GM12878 (cell line): ENCODE measurements at regions of chr1 and their contacts with region 1.

Region 1: DNA sequence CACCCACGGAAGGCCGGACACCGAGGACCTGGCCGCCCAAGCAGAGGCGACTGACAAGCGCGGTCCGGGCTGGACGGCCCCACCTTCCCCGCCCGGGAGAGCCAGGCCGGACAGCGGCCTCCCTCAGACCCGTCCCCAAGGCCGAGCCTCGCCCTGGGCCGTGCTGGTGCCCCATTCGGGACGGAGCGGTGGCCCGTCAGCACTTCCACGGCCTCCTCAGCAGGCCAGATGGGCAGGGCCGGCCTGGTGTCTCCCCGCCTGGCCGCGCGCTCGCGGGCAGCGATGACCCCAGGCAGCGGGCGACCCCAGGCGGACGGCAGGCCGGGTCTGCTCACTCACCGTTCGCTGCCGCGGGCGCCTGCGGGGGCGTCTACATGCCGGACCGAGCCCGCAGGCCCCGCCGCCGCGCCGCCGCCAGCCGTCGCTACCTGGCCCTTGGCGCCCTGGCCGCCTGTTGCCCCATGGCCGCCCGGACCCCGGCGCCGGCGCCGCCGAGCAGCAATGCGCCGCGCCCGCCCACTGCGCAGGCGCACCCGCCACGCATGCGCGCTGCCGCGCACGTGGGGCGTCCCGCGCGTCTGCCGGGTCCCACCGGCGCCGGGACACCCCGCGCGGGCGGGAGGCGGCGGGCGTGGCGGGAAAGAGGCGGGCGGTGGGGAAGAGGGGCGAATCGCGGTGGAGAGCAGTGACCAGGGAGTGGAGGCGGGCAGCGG is at the start of gene NADK:
- DNase-seq: no peak
- ATAC-seq: peak; percentile 17
- H3K4me3 ChIP-seq: peak within 1 kb of the TSS; percentile 68
- H3K27ac ChIP-seq: peak within 1 kb of the TSS; percentile 98
- H3K4me1 ChIP-seq: peaks cover 52% of the 10 kb centered on the region
- H3K27me3 ChIP-seq: no peaks in the 10 kb centered on the region
- CTCF ChIP-seq: no peak
- EP300 ChIP-seq: no peak
- POLR2A ChIP-seq: peak; percentile 60
- RAD21 ChIP-seq: no peak
- polyA plus RNA-seq, gene NADK: 1.1 to 3.6 TPM

Region 2: DNA sequence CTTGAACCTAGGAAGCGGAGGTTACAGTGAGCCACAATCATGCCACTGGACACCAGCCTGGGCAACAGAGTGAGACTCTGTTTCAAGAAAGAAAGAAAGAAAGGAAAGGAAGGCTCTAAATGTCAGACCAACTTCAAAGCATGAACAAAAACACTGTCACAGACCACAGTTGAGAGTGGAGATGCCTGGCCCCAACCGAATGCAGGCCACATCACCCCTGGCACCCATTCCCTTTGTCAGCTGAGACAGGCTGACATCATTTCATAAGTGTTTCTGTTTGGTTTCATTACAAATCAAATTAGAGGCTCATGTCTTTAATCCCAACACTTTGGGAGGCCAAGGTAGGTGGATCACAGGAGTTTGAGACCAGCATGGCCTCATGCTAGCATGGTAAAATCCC is 28.8 kb after region 1 on chr1:
- CTCF ChIA-PET with region 1: interaction called, 3 read pairs
- POLR2A ChIA-PET with region 1: interaction called, 13 read pairs
- RAD21 ChIA-PET with region 1: interaction called, 4 read pairs
- SMC1A ChIA-PET with region 1: interaction called, 5 read pairs
- in situ Hi-C with region 1: no loop called
- intact Hi-C with region 1: no loop called
- DNase-seq: no peak
- ATAC-seq: no peak
- H3K4me3 ChIP-seq: no peak overlapping the region
- H3K27ac ChIP-seq: no peak overlapping the region
- H3K4me1 ChIP-seq: peaks cover 2% of the 10 kb centered on the region
- H3K27me3 ChIP-seq: no peaks in the 10 kb centered on the region
- CTCF ChIP-seq: no peak
- EP300 ChIP-seq: no peak
- POLR2A ChIP-seq: no peak
- RAD21 ChIP-seq: no peak

Region 3: GRCh38 chr1:2073382-2074230 is 295.5 kb after region 1 on chr1:
- CTCF ChIA-PET with region 1: no interaction called
- POLR2A ChIA-PET with region 1: no interaction called
- RAD21 ChIA-PET with region 1: no interaction called
- SMC1A ChIA-PET with region 1: no interaction called
- in situ Hi-C with region 1: no loop called
- intact Hi-C with region 1: no loop called
- DNase-seq: no peak
- ATAC-seq: no peak
- H3K4me3 ChIP-seq: no peak overlapping the region
- H3K27ac ChIP-seq: no peak overlapping the region
- H3K4me1 ChIP-seq: no peaks in the 10 kb centered on the region
- H3K27me3 ChIP-seq: no peaks in the 10 kb centered on the region
- CTCF ChIP-seq: no peak
- EP300 ChIP-seq: no peak
- POLR2A ChIP-seq: no peak
- RAD21 ChIP-seq: no peak